ENCODE measurements at regions of chr3 and their contacts with region 1.

Region 1: GRCh38 chr3:87082796-87083440 is 92.0 kb upstream of the VGLL3 start:
- DNase-seq: no peak
- ATAC-seq: peak; percentile 90
- H3K4me3 ChIP-seq: no peak overlapping the region
- H3K27ac ChIP-seq: no peak overlapping the region
- H3K4me1 ChIP-seq: no peaks in the 10 kb centered on the region
- H3K27me3 ChIP-seq: no peaks in the 10 kb centered on the region

Region 2: DNA sequence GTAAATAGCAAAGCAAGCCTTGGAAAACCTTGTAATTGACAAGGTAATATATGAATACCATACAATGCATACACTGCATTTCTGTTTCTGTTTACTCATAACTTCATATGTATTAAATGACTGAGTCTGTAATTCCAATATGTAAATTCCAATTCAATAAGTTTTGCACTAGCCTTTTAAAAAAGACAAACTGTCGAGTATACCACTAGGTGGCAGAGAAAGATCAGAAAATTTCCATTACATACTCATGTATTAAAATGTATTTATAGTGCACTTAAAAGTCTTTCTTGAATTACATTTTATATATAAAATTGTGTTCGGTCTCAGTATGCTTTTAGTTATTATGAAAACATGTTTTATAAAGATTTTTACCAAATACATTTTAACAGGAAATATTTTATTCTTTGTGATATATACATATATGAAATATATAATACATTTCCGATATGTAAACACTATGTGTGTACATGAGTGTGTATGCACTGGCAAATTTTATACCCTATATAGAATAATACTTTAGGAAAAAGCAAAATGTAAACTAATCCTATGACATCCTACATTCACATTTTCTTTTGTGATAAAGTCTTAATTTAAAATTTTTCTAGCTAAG is 308.7 kb before region 1 on chr3:
- intact Hi-C with region 1: loop called (anchors 2 to 5 kb)
- DNase-seq: no peak
- ATAC-seq: no peak
- H3K4me3 ChIP-seq: no peak overlapping the region
- H3K27ac ChIP-seq: no peak overlapping the region
- H3K4me1 ChIP-seq: no peaks in the 10 kb centered on the region
- H3K27me3 ChIP-seq: no peaks in the 10 kb centered on the region

Region 3: DNA sequence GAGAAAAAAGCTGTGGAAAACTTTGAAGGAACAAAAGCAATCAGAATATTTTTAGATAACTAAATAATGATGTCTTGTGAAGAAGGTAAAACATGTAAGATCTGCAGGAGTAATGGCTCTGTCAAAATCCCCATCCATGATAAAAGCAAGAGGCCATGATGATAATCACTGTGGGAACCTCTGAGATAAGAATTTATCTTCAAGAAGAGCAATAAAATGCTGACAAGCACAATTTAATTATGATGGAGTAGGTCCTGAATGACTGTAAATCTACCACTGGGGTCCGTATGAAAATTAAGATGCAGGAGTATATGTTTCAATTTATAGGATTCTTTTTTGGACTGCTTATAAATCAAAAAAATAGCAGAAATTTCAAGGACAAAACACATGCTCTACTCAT is 75.9 kb after region 1 on chr3:
- intact Hi-C with region 1: no loop called
- DNase-seq: no peak
- ATAC-seq: no peak
- H3K4me3 ChIP-seq: no peak overlapping the region
- H3K27ac ChIP-seq: no peak overlapping the region
- H3K4me1 ChIP-seq: no peaks in the 10 kb centered on the region
- H3K27me3 ChIP-seq: no peaks in the 10 kb centered on the region